ENCODE measurements at regions of chr4 and their contacts with region 1.

Region 1: DNA sequence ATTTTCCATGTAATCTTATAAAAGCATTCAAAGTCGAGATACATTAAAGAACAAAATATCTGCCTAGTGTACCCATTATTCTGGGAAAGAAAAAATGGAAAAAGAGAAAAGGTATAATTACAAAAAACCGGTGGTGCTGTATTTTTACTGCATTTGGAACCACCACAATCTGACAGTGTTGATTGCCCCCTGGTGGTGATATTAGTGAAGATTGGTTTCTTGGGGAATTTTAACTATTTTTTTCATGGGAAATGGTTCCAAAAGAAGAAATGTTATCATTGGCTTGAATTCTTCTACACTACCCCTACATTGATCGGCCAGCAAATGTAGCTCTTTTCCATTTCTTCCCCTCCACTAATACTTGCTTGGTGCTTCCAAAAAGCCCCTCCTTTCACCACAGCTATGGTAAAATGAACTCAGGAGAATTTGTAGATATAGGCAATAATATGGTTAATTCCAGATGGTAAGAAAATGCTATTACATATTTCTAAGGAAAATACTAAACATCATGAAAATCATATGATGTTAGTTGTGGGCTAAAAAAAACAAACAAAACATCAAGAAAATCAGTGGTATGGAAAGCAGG is 50.0 kb downstream of the COX18 start:
- DNase-seq: peak; percentile 24
- ATAC-seq: no peak
- H3K4me3 Mint-ChIP-seq: no peak overlapping the region
- H3K27ac Mint-ChIP-seq: no peak overlapping the region
- H3K4me1 Mint-ChIP-seq: no peaks in the 10 kb centered on the region
- H3K27me3 Mint-ChIP-seq: peaks cover 5% of the 10 kb centered on the region
- CTCF ChIP-seq: peak; percentile 87

Region 2: GRCh38 chr4:72505314-72505744 is 514.2 kb before region 1 on chr4:
- CTCF ChIA-PET with region 1: interaction called, 3 read pairs
- POLR2A ChIA-PET with region 1: no interaction called
- intact Hi-C with region 1: loop called (anchors 10 kb)
- DNase-seq: peak; percentile 2
- ATAC-seq: no peak
- H3K4me3 Mint-ChIP-seq: no peak overlapping the region
- H3K27ac Mint-ChIP-seq: no peak overlapping the region
- H3K4me1 Mint-ChIP-seq: no peaks in the 10 kb centered on the region
- H3K27me3 Mint-ChIP-seq: peaks cover 8% of the 10 kb centered on the region
- CTCF ChIP-seq: peak; percentile 49

Region 3: DNA sequence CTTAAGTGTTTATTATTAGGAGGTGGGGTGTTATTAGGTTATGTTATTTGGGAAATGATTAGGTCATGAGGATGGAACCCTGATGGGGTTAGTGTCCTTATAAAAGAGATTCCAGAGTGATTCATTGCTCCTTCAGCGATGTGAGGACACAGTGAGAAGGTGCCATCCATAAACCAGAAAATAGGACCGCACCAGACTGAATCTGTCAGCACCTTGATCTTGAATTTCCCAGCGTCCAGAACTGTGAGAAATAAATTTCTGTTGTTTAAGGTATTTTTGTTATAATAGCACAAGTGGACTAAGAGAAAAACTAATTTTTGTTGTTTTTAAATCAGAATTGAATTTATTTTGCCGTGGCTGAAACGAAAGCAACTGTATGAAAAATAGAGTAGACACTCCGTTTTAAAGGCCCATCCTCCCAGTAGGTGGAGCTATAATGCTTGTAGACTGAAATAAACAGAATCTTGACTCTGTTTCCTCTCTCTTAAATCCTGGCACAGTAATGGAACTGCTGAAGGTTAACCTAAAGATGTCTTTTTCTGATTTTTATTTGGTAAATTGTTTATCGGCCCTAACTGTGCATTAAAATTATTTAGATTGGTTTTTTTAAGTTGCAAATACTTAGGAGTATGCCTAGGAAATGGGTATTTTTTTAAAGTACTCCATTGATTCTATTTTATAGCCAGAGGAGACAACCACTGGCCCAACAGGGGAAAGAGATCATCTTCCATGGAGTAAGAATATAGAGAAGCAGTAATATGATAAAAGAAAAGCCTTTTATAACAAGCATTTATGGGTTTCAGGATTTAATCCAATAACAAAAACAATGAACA is 317.4 kb before region 1 on chr4:
- CTCF ChIA-PET with region 1: interaction called, 17 read pairs
- POLR2A ChIA-PET with region 1: no interaction called
- intact Hi-C with region 1: loop called (anchors 5 kb)
- DNase-seq: peak; percentile 56
- ATAC-seq: no peak
- H3K4me3 Mint-ChIP-seq: peak overlapping the region; percentile 72
- H3K27ac Mint-ChIP-seq: no peak overlapping the region
- H3K4me1 Mint-ChIP-seq: no peaks in the 10 kb centered on the region
- H3K27me3 Mint-ChIP-seq: no peaks in the 10 kb centered on the region
- CTCF ChIP-seq: peak; percentile 78

Region 4: GRCh38 chr4:72997409-72997808 is 22.1 kb before region 1 on chr4:
- CTCF ChIA-PET with region 1: no interaction called
- POLR2A ChIA-PET with region 1: no interaction called
- intact Hi-C with region 1: no loop called
- DNase-seq: no peak
- ATAC-seq: no peak
- H3K4me3 Mint-ChIP-seq: no peak overlapping the region
- H3K27ac Mint-ChIP-seq: no peak overlapping the region
- H3K4me1 Mint-ChIP-seq: no peaks in the 10 kb centered on the region
- H3K27me3 Mint-ChIP-seq: peaks cover 15% of the 10 kb centered on the region
- CTCF ChIP-seq: no peak

Measured in activated CD8-positive, alpha-beta T cell treated with anti-CD3 and anti-CD28 coated beads for 36 hours (primary cell).